BJ (cell line): ENCODE measurements at regions of chr11 and their contacts with region 1.

Region 1: DNA sequence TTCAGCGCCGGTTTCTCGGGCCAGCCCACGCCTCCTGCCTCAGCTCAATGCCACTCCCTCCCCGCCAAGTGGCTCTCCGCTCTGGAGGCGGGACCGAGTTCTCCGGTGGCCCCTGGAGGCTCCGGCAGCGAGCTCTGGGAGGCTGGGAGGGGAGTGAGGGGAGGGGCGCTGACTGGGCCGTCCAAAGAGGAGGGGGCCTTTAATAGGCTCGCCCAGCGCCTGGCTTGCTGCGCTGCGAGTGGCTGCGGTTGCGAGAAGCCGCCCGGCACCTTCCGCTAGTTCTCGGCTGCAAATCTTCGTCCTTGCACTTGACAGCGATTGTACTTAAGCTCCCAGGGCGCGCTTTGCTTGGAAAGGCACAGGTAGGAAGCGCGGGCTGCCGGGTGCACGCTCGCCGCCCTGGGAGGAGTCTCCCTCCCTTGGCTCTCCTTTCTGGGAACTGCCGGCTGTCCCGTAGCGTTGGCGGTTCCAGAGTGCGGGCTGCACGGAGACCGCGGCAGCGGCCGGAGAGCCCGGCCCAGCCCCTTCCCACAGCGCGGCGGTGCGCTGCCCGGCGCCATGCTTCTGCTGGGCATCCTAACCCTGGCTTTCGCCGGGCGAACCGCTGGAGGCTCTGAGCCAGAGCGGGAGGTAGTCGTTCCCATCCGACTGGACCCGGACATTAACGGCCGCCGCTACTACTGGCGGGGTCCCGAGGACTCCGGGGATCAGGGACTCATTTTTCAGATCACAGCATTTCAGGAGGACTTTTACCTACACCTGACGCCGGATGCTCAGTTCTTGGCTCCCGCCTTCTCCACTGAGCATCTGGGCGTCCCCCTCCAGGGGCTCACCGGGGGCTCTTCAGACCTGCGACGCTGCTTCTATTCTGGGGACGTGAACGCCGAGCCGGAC is at the start of gene ADAMTS15:
- DNase-seq: no peak
- H3K4me3 ChIP-seq: peak within 1 kb of the TSS; percentile 56
- H3K27me3 ChIP-seq: no peaks in the 10 kb centered on the region
- CTCF ChIP-seq: no peak
- polyA plus RNA-seq, gene ADAMTS15: 2.7 and 5.6 TPM in 2 replicates

Region 2: DNA sequence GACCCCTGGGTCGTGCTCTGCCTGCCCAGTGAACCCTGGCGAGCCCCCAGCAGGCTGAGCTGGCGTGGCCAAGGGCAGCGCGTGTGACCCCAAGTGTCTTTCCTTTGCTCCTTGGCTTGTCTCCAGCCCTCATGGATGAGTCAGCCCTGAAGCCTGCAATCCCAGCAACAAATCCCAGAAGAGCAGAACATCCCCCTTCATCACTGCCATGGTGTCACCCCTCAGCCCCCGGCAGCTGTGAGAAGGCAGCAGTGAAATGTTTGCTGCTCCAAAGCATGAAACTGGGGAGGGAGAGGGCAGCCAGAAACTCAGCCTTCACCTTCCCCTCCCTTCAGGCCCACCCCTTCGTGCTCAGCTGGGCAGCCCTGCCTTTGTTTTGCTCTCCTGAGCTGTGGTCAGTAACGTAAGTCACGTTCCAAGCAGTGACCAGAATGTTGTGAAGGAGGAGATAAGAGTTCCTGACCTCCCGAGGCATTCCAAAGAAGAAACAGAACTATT is 29.6 kb after region 1 on chr11:
- CTCF ChIA-PET with region 1: interaction called, 11 read pairs
- POLR2A ChIA-PET with region 1: no interaction called
- DNase-seq: peak; percentile 82
- H3K4me3 ChIP-seq: no peak overlapping the region
- H3K27me3 ChIP-seq: no peaks in the 10 kb centered on the region
- CTCF ChIP-seq: no peak